Activated CD4-positive, alpha-beta memory T cell treated with anti-CD3 and anti-CD28 coated beads for 36 hours (primary cell): ENCODE measurements at regions of chr5 and their contacts with region 1.

Region 1: DNA sequence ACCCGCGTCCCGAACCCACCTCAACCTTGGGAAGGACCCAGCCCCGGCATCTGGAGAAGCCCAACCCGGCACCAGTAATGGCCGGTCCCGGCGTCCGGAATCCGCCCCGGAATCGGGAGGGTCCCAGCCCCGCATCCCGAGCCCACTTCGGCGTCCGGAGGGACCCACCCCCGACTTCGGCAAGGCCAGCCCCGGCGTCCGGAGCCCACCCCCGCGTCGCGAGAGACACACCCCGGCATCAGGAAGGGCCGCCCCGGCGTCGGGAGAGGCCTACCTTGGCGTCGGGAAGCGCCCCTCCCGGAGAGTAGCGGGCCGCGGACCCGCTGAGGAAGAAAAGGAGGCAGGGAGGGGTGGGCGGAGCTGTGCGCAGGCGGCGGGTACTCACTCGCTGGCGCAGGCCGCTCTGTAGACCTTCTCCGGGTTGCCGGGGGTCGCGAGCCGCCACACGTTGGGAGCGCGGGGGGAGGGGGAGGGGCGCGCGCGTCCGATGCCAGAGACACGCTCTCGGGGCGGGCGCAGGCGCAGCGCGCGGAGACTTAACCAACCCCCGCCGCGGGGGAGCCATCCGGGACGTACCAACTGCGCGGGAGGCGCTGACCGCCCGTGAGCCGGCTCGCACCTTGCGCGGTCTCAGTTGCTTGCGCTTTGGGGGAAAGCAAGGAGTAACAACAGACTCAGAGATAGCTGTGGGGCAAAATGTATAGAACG is at the start of gene UIMC1:
- DNase-seq: peak; percentile 94
- H3K4me3 Mint-ChIP-seq: peak within 1 kb of the TSS; percentile 91
- H3K27ac Mint-ChIP-seq: peak within 1 kb of the TSS; percentile 93
- H3K4me1 Mint-ChIP-seq: peaks cover 23% of the 10 kb centered on the region
- H3K27me3 Mint-ChIP-seq: no peaks in the 10 kb centered on the region
- total RNA-seq, gene UIMC1: 52.9 to 53.5 TPM

Region 2: DNA sequence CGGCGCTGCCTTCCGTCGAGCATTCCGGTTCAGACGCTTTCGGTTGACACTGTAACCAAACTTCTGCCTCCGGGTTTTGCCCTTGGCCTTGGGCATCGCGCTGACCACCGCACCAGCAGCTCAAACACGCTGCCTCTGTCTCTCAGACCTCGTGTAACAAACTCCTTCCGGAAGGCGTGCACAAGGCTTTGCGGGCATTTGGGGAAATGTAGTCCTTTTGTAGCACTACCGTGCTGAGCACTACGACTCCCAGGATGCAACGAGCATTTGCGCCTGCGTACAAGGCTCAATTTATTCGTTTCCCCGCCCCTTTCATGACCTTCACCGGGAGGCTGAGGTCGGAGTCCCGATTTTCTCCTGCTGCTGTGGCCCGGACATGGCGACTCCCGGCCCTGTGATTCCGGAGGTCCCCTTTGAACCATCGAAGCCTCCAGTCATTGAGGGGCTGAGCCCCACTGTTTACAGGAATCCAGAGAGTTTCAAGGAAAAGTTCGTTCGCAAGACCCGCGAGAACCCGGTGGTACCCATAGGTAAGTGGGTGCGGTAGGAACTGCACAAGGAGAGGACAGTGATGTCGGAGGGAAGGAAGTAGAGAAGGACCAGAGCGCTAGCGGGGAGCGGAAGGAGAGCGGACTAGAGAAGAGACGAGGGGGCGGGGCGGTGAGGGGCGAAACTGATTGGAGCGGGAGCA is 617.8 kb before region 1 on chr5 and contains the starts of genes HIGD2A and NOP16:
- CTCF ChIA-PET with region 1: no interaction called
- POLR2A ChIA-PET with region 1: no interaction called
- intact Hi-C with region 1: loop called (anchors 5 kb)
- DNase-seq: peak; percentile 100
- H3K4me3 Mint-ChIP-seq: peak within 1 kb of the TSS; percentile 99
- H3K27ac Mint-ChIP-seq: peak within 1 kb of the TSS; percentile 98
- H3K4me1 Mint-ChIP-seq: peaks cover 27% of the 10 kb centered on the region
- H3K27me3 Mint-ChIP-seq: no peaks in the 10 kb centered on the region
- total RNA-seq, gene HIGD2A: 112 to 119 TPM
- total RNA-seq, gene NOP16: 52.5 to 57.6 TPM

Region 3: GRCh38 chr5:176994460-176995121 is 11.8 kb before region 1 on chr5:
- CTCF ChIA-PET with region 1: interaction called, 15 read pairs
- POLR2A ChIA-PET with region 1: interaction called, 8 read pairs
- intact Hi-C with region 1: no loop called
- DNase-seq: no peak
- H3K4me3 Mint-ChIP-seq: no peak overlapping the region
- H3K27ac Mint-ChIP-seq: peak overlapping the region; percentile 83
- H3K4me1 Mint-ChIP-seq: peaks cover 45% of the 10 kb centered on the region
- H3K27me3 Mint-ChIP-seq: no peaks in the 10 kb centered on the region

Region 4: DNA sequence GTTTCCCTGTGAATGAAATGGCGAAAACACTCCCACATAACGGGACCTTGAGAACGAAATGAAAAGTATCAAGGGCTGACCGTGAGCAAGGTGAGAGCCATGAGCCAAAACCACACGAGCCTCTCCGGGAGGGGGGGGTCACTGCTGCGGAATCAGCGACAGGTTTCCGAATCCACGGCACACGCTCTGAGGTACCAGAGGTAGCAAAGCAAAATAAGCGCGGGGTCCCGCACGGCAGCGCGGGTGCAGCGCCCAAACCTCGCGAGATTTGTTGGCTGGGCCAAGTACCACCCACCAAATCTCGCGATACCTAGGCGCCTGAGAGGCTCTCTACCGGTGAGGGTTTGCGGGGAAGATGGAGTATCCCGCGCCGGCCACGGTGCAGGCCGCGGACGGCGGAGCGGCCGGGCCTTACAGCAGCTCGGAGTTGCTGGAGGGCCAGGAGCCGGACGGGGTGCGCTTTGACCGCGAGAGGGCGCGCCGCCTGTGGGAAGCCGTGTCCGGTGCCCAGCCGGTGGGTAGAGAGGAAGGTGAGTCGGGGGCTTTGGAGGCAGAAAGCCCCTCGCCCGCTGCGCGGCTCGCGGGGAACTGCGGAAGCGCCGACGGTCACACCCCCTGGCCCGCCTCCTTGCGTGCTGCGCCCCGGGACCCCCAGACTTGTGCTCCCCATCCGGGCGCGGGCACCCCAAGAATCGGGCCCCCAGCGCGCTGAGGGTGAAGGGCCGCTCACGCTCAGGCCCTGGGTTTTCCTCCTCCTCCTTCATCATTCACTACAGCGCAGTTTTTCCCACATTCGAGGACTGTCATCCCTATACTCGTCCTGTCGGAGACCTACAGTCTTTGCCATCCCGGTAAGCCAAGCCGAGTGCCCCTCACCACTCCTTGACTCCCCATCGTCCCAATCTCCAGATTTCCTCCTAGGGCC is 16.2 kb after region 1 on chr5 and contains the start of gene ZNF346:
- CTCF ChIA-PET with region 1: interaction called, 13 read pairs
- POLR2A ChIA-PET with region 1: interaction called, 14 read pairs
- intact Hi-C with region 1: loop called (anchors 1 kb)
- DNase-seq: peak; percentile 94
- H3K4me3 Mint-ChIP-seq: peak within 1 kb of the TSS; percentile 89
- H3K27ac Mint-ChIP-seq: peak within 1 kb of the TSS; percentile 89
- H3K4me1 Mint-ChIP-seq: peaks cover 33% of the 10 kb centered on the region
- H3K27me3 Mint-ChIP-seq: no peaks in the 10 kb centered on the region
- total RNA-seq, gene ZNF346: 12.7 to 15.6 TPM